Naive thymus-derived CD4-positive, alpha-beta T cell (primary cell): ENCODE measurements at regions of chr9 and their contacts with region 1.

Region 1: GRCh38 chr9:89602978-89603766 is 1.6 kb upstream of the GADD45G start:
- DNase-seq: peak; percentile 74 to 88 (median 85)
- ATAC-seq: peak; percentile 55
- H3K4me3 ChIP-seq: peak overlapping the region; percentile 72
- H3K4me3 Mint-ChIP-seq: peak overlapping the region; percentile 79 to 92 (median 88)
- H3K27ac ChIP-seq: no peak overlapping the region
- H3K27ac Mint-ChIP-seq: peak overlapping the region in 7 of 9 donors; percentile 12 to 88 (median 62)
- H3K4me1 ChIP-seq: peaks cover 12 to 23% of the 10 kb centered on the region in 2 donors
- H3K4me1 Mint-ChIP-seq: peaks cover 0 to 34% (median 23%) of the 10 kb centered on the region in 7 donors
- H3K27me3 ChIP-seq: no peaks in the 10 kb centered on the region
- H3K27me3 Mint-ChIP-seq: peaks cover 0 to 21% (median 0%) of the 10 kb centered on the region in 5 donors

Region 2: GRCh38 chr9:89295400-89295799 is 307.8 kb before region 1 on chr9:
- CTCF ChIA-PET with region 1: no interaction called
- POLR2A ChIA-PET with region 1: no interaction called
- intact Hi-C with region 1: no loop called
- DNase-seq: no peak
- ATAC-seq: no peak
- H3K4me3 ChIP-seq: no peak overlapping the region
- H3K4me3 Mint-ChIP-seq: no peak overlapping the region
- H3K27ac ChIP-seq: no peak overlapping the region
- H3K27ac Mint-ChIP-seq: no peak overlapping the region
- H3K4me1 ChIP-seq: no peaks in the 10 kb centered on the region
- H3K4me1 Mint-ChIP-seq: no peaks in the 10 kb centered on the region
- H3K27me3 ChIP-seq: no peaks in the 10 kb centered on the region
- H3K27me3 Mint-ChIP-seq: peaks cover 0 to 28% (median 5%) of the 10 kb centered on the region in 5 donors

Region 3: GRCh38 chr9:89310475-89311346 is 292.5 kb before region 1 on chr9 and contains the start of gene CKS2:
- CTCF ChIA-PET with region 1: no interaction called
- POLR2A ChIA-PET with region 1: no interaction called
- intact Hi-C with region 1: loop called (anchors 2 kb)
- DNase-seq: peak; percentile 97 to 100 (median 99)
- ATAC-seq: peak; percentile 94
- H3K4me3 ChIP-seq: peak within 1 kb of the TSS; percentile 82
- H3K4me3 Mint-ChIP-seq: peak within 1 kb of the TSS; percentile 94 to 99 (median 96)
- H3K27ac ChIP-seq: peak within 1 kb of the TSS; percentile 96
- H3K27ac Mint-ChIP-seq: peak within 1 kb of the TSS; percentile 97 to 100 (median 99)
- H3K4me1 ChIP-seq: peaks cover 22 to 24% of the 10 kb centered on the region in 2 donors
- H3K4me1 Mint-ChIP-seq: peaks cover 0 to 36% (median 32%) of the 10 kb centered on the region in 7 donors
- H3K27me3 ChIP-seq: peaks cover 0 to 4% of the 10 kb centered on the region in 2 donors
- H3K27me3 Mint-ChIP-seq: peaks cover 0 to 7% (median 0%) of the 10 kb centered on the region in 5 donors
- total RNA-seq, gene CKS2: 5.2 to 121 (median 8.9) TPM

Region 4: DNA sequence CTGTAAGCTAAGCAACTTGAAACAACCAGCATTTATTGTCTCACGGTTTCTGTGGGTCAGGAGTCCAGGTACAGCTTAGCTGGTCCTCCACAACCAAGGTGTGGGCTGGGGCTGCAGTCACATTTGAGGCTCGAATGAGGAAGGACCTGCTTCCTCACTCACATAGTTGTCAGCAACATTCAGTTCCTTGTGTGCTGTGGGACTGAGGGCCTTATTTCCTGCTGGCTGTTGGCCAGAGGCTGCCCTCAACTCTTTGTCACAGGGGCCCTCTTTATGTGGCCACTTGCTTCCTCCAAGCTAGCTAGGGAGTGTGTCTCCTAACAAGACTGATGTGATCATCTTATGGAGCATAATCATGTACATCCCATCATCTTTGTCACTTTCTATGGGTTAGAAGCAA is 76.1 kb before region 1 on chr9:
- CTCF ChIA-PET with region 1: no interaction called
- POLR2A ChIA-PET with region 1: no interaction called
- intact Hi-C with region 1: no loop called
- DNase-seq: no peak
- ATAC-seq: peak; percentile 22
- H3K4me3 ChIP-seq: no peak overlapping the region
- H3K4me3 Mint-ChIP-seq: peak overlapping the region in 7 of 10 donors; percentile 4 to 90 (median 36)
- H3K27ac ChIP-seq: no peak overlapping the region
- H3K27ac Mint-ChIP-seq: peak overlapping the region; percentile 26 to 100 (median 95)
- H3K4me1 ChIP-seq: peaks cover 93 to 97% of the 10 kb centered on the region in 2 donors
- H3K4me1 Mint-ChIP-seq: peaks cover 90 to 100% (median 100%) of the 10 kb centered on the region in 7 donors
- H3K27me3 ChIP-seq: no peaks in the 10 kb centered on the region
- H3K27me3 Mint-ChIP-seq: no peaks in the 10 kb centered on the region

Region 5: GRCh38 chr9:89743573-89744361 is 140.6 kb after region 1 on chr9:
- CTCF ChIA-PET with region 1: interaction called, 4 read pairs
- POLR2A ChIA-PET with region 1: no interaction called
- intact Hi-C with region 1: loop called (anchors 1 kb)
- DNase-seq: peak; percentile 23 to 82 (median 76)
- ATAC-seq: peak; percentile 88
- H3K4me3 ChIP-seq: peak overlapping the region; percentile 35
- H3K4me3 Mint-ChIP-seq: peak overlapping the region; percentile 62 to 85 (median 76)
- H3K27ac ChIP-seq: peak overlapping the region; percentile 37
- H3K27ac Mint-ChIP-seq: peak overlapping the region; percentile 49 to 94 (median 83)
- H3K4me1 ChIP-seq: peaks cover 18 to 65% of the 10 kb centered on the region in 2 donors
- H3K4me1 Mint-ChIP-seq: peaks cover 48 to 91% (median 87%) of the 10 kb centered on the region in 7 donors
- H3K27me3 ChIP-seq: no peaks in the 10 kb centered on the region
- H3K27me3 Mint-ChIP-seq: no peaks in the 10 kb centered on the region

Region 6: GRCh38 chr9:89919169-89919681 is 316.1 kb after region 1 on chr9:
- CTCF ChIA-PET with region 1: interaction called, 10 read pairs
- POLR2A ChIA-PET with region 1: no interaction called
- intact Hi-C with region 1: loop called (anchors 1 kb)
- DNase-seq: peak in 8 of 9 donors; percentile 14 to 53 (median 23)
- ATAC-seq: peak; percentile 77
- H3K4me3 ChIP-seq: no peak overlapping the region
- H3K4me3 Mint-ChIP-seq: peak overlapping the region in 3 of 10 donors; percentile 10 to 48 (median 17)
- H3K27ac ChIP-seq: no peak overlapping the region
- H3K27ac Mint-ChIP-seq: peak overlapping the region in 1 of 9 donors; percentile 15
- H3K4me1 ChIP-seq: no peaks in the 10 kb centered on the region
- H3K4me1 Mint-ChIP-seq: peaks cover 4 to 14% (median 8%) of the 10 kb centered on the region in 7 donors
- H3K27me3 ChIP-seq: no peaks in the 10 kb centered on the region
- H3K27me3 Mint-ChIP-seq: peaks cover 0 to 17% (median 7%) of the 10 kb centered on the region in 5 donors

Region 7: GRCh38 chr9:90102292-90102901 is 499.2 kb after region 1 on chr9:
- CTCF ChIA-PET with region 1: interaction called, 51 read pairs
- POLR2A ChIA-PET with region 1: interaction called, 7 read pairs
- intact Hi-C with region 1: loop called (anchors 1 kb)
- DNase-seq: peak; percentile 41 to 88 (median 79)
- ATAC-seq: peak; percentile 100
- H3K4me3 ChIP-seq: no peak overlapping the region
- H3K4me3 Mint-ChIP-seq: no peak overlapping the region
- H3K27ac ChIP-seq: no peak overlapping the region
- H3K27ac Mint-ChIP-seq: peak overlapping the region in 1 of 9 donors; percentile 40
- H3K4me1 ChIP-seq: peaks cover 0 to 6% of the 10 kb centered on the region in 2 donors
- H3K4me1 Mint-ChIP-seq: peaks cover 0 to 11% (median 6%) of the 10 kb centered on the region in 7 donors
- H3K27me3 ChIP-seq: no peaks in the 10 kb centered on the region
- H3K27me3 Mint-ChIP-seq: peaks cover 0 to 16% (median 0%) of the 10 kb centered on the region in 5 donors

Region 8: GRCh38 chr9:90870621-90871326 is 1267.6 kb after region 1 on chr9:
- CTCF ChIA-PET with region 1: interaction called, 3 read pairs
- POLR2A ChIA-PET with region 1: no interaction called
- intact Hi-C with region 1: loop called in 1 of 2 experiments (anchors 1 kb)
- DNase-seq: peak in 5 of 9 donors; percentile 32 to 50 (median 44)
- ATAC-seq: peak; percentile 60
- H3K4me3 ChIP-seq: no peak overlapping the region
- H3K4me3 Mint-ChIP-seq: no peak overlapping the region
- H3K27ac ChIP-seq: no peak overlapping the region
- H3K27ac Mint-ChIP-seq: no peak overlapping the region
- H3K4me1 ChIP-seq: no peaks in the 10 kb centered on the region
- H3K4me1 Mint-ChIP-seq: no peaks in the 10 kb centered on the region
- H3K27me3 ChIP-seq: peaks cover 0 to 2% of the 10 kb centered on the region in 2 donors
- H3K27me3 Mint-ChIP-seq: peaks cover 0 to 26% (median 6%) of the 10 kb centered on the region in 5 donors